ENCODE measurements at regions of chr1 and their contacts with region 1.

Region 1: GRCh38 chr1:59007820-59008598 is 224.2 kb upstream of the JUN start:
- DNase-seq: peak; percentile 7
- H3K4me3 Mint-ChIP-seq: peak overlapping the region; percentile 52
- H3K27ac Mint-ChIP-seq: peak overlapping the region; percentile 94
- H3K4me1 Mint-ChIP-seq: peaks cover 90% of the 10 kb centered on the region
- H3K27me3 Mint-ChIP-seq: no peaks in the 10 kb centered on the region

Region 2: DNA sequence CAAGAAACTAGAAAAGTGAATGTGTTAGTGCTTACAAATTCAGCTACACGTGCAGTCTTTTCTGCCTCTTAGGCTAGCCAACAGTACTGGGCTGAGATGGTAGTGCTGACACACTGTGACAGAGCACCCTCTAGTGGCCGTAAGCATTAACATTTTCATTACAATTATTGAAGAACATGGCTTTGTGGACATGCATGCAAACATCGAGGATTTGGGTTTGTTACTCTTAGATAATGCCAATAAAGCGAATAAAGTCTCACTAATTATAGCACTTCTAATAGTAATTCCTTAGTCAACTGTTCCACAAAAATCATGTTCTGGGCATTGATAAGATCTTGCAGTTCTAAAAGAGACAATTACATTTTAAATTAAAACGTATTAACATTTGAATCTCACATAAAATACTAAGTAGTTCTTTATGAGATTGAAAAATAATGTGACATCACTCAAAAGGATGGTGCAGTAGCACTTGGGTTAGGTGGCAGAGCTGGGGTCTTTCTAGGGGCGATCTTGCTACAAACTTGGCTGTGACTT is 355.3 kb before region 1 on chr1:
- intact Hi-C with region 1: no loop called
- DNase-seq: peak; percentile 43
- H3K4me3 Mint-ChIP-seq: no peak overlapping the region
- H3K27ac Mint-ChIP-seq: no peak overlapping the region
- H3K4me1 Mint-ChIP-seq: peaks cover 7% of the 10 kb centered on the region
- H3K27me3 Mint-ChIP-seq: no peaks in the 10 kb centered on the region

Region 3: GRCh38 chr1:58884706-58885661 is 123.0 kb before region 1 on chr1:
- intact Hi-C with region 1: loop called (anchors 5 kb)
- DNase-seq: peak; percentile 3
- H3K4me3 Mint-ChIP-seq: peak overlapping the region; percentile 65
- H3K27ac Mint-ChIP-seq: peak overlapping the region; percentile 78
- H3K4me1 Mint-ChIP-seq: peaks cover 70% of the 10 kb centered on the region
- H3K27me3 Mint-ChIP-seq: peaks cover 5% of the 10 kb centered on the region

Region 4: DNA sequence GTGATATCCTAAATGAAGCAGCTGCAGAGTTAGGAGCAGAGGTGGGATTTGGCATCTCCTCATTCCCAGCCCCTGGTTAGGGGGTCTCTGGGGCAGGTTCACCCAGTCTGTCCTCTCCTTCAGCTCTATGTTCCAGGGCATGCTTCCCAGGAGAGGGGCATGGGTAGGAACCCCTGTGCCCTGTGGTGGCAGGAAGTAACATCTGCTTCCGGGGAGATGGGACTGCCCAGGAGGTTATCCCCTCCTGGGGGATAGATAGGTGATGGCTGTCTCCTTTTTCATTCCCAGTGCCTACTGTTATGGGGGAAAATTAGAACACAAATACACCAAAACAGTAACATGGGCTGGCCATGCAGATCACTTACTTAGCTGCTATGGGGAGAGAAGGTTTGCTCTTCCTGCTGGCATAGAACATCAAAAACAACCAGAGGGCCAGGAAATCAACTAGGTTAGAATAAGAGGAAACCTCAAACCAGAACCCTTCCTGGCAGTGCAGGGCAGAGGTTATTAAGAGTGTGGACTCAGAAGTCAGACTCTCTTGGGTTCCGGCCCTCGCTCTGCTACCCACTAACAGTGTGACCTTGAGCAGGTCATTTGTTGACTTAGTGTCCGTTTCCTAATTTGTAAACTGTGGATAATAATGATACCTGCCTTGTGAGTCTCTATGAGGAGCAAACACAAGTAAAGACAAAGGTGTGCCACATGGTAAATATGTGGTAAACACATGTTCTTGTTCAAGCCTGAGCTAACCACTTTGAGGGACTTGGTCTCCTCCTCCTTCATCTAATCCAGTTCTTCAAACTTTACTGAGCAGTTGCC is 66.3 kb before region 1 on chr1:
- intact Hi-C with region 1: loop called (anchors 5 kb)
- DNase-seq: peak; percentile 46
- H3K4me3 Mint-ChIP-seq: peak overlapping the region; percentile 60
- H3K27ac Mint-ChIP-seq: peak overlapping the region; percentile 85
- H3K4me1 Mint-ChIP-seq: peaks cover 77% of the 10 kb centered on the region
- H3K27me3 Mint-ChIP-seq: no peaks in the 10 kb centered on the region

Region 5: GRCh38 chr1:59020151-59020997 is 12.4 kb after region 1 on chr1:
- intact Hi-C with region 1: loop called (anchors 1 kb)
- DNase-seq: peak; percentile 51
- H3K4me3 Mint-ChIP-seq: peak overlapping the region; percentile 78
- H3K27ac Mint-ChIP-seq: peak overlapping the region; percentile 94
- H3K4me1 Mint-ChIP-seq: peaks cover 68% of the 10 kb centered on the region
- H3K27me3 Mint-ChIP-seq: no peaks in the 10 kb centered on the region

Region 6: DNA sequence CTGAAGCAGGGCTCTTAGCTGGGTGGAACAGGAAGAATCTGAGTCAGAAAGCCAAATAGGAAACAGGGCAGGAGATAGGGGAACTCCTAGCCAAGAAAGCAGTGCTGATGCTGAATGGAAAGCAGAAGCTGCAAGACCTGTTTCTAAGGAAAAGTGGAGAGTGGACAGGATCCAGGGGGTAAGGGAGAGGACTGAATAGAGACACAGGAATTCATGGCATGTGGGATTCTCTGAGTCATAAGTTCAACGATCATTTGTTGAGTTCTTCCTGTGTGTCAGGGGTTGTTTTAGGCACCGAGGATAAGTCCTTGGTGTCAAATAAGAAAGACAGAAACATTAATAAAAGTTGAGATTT is 135.1 kb after region 1 on chr1:
- intact Hi-C with region 1: loop called (anchors 5 kb)
- DNase-seq: no peak
- H3K4me3 Mint-ChIP-seq: peak overlapping the region; percentile 8
- H3K27ac Mint-ChIP-seq: peak overlapping the region; percentile 62
- H3K4me1 Mint-ChIP-seq: peaks cover 86% of the 10 kb centered on the region
- H3K27me3 Mint-ChIP-seq: no peaks in the 10 kb centered on the region

Region 7: GRCh38 chr1:59432531-59433439 is 424.8 kb after region 1 on chr1:
- intact Hi-C with region 1: loop called (anchors 1 kb)
- DNase-seq: no peak
- H3K4me3 Mint-ChIP-seq: no peak overlapping the region
- H3K27ac Mint-ChIP-seq: peak overlapping the region; percentile 61
- H3K4me1 Mint-ChIP-seq: peaks cover 49% of the 10 kb centered on the region
- H3K27me3 Mint-ChIP-seq: no peaks in the 10 kb centered on the region